Activated T-helper 1 cell treated with anti-CD3 and anti-CD28 coated beads, Interleukin-12 subunit alpha, Interleukin-12 subunit beta, Interleukin-2, Interleukin-4 antibody, amounts not matched to agents 30 ng/mL and 10 ng/mL and 1 ng/mL, durations not matched to agents 14 hours and 24 hours and 36 hours (primary cell): ENCODE measurements at regions of chr10 and their contacts with region 1.

Region 1: DNA sequence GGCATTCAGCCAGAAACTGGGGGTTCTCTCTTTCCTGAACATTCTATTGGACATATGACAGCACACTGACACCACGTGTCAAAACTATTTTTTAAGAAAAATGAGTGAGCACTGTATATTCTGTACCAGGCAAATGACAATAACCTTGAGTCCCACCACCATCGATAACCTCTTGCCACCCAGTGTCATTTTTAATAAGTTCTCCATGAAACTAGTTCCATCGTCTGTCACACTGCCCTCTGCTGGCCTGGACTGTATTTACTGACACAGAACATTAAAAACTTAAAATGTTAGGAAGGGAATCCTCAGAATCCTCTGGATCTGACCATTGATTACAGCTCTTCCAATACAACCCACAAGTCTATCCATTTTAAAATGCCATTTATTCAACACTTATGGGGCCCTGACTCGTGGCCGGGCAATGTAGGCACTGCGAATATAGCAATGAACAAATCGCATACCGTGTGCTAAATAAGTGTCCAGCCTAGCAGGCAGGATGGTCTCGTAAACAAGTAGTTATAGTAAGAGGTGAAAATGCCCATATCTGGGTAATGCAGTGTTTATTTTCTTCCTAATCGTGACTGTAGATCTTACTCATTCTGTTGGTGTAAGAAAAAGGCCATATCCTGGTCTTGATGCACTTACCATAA is 35.9 kb upstream of the CACNB2 start:
- DNase-seq: no peak
- H3K4me3 Mint-ChIP-seq: no peak overlapping the region
- H3K27ac Mint-ChIP-seq: no peak overlapping the region
- H3K4me1 Mint-ChIP-seq: no peaks in the 10 kb centered on the region
- H3K27me3 Mint-ChIP-seq: no peaks in the 10 kb centered on the region

Region 2: DNA sequence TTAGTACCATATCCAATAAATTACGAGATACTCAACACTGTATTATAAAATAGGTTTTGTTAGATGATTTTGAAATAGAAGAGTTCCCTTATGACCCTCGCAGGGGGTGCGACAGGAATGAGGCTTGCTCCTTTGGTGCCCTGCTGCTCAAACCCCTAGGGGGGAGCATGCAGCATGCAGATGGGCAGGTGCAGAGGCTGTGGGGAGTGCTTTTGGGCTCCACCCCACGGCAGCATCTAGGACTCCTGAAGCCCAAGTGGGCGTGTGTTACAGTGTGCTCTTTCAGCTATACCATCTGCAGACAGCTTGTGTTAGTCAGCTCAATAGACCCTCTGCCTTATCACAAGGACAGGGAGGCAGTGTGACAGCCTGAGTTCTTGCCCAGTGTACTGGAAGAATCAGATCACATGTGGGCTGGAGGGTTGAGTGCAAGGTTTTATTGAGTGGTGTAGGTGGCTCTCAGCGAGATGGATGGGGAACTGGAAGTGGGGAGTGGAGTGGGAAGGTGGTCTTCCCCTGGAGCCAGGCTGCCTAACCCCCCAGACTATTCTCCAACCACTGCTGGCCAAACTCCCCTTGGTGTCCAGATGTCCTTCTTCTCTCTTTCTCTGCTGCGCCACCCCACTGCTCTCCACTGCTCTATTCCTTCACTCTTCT is 298.3 kb before region 1 on chr10:
- intact Hi-C with region 1: loop called (anchors 10 kb)
- DNase-seq: no peak
- H3K4me3 Mint-ChIP-seq: no peak overlapping the region
- H3K27ac Mint-ChIP-seq: no peak overlapping the region
- H3K4me1 Mint-ChIP-seq: peaks cover 14% of the 10 kb centered on the region
- H3K27me3 Mint-ChIP-seq: peaks cover 9% of the 10 kb centered on the region

Region 3: GRCh38 chr10:18325889-18326531 is 221.7 kb after region 1 on chr10:
- intact Hi-C with region 1: no loop called
- DNase-seq: no peak
- H3K4me3 Mint-ChIP-seq: no peak overlapping the region
- H3K27ac Mint-ChIP-seq: no peak overlapping the region
- H3K4me1 Mint-ChIP-seq: no peaks in the 10 kb centered on the region
- H3K27me3 Mint-ChIP-seq: no peaks in the 10 kb centered on the region